Activated naive CD4-positive, alpha-beta T cell treated with anti-CD3 and anti-CD28 coated beads for 36 hours (primary cell): ENCODE measurements at regions of chr7 and their contacts with region 1.

Region 1: GRCh38 chr7:50304158-50304910 is at the start of gene IKZF1:
- DNase-seq: peak; percentile 74
- H3K4me3 Mint-ChIP-seq: peak within 1 kb of the TSS; percentile 95
- H3K27ac Mint-ChIP-seq: peak within 1 kb of the TSS; percentile 99
- H3K4me1 Mint-ChIP-seq: peaks cover 34% of the 10 kb centered on the region
- H3K27me3 Mint-ChIP-seq: no peaks in the 10 kb centered on the region
- total RNA-seq, gene IKZF1: 213 to 226 TPM

Region 2: DNA sequence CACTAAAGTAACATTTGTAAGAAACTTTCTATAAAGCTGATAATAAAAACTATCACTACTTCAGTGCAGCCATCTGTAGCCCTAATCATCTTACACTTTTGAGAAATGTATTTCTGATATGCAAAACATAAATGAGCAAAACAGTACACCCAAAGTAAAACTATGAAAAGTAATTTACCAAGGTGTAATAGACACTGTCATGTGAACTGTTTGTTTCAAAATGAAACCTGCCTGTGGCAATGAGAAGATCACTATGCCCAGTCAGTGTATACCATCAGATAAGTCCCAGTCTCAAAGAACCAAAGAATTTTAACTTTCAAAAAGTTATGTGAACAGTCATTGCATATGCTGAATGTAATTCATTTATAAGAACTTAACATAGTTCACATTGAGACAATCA is 981.9 kb before region 1 on chr7:
- CTCF ChIA-PET with region 1: no interaction called
- intact Hi-C with region 1: no loop called
- DNase-seq: no peak
- H3K4me3 Mint-ChIP-seq: no peak overlapping the region
- H3K27ac Mint-ChIP-seq: no peak overlapping the region
- H3K4me1 Mint-ChIP-seq: no peaks in the 10 kb centered on the region
- H3K27me3 Mint-ChIP-seq: no peaks in the 10 kb centered on the region

Region 3: GRCh38 chr7:50156706-50157105 is 147.6 kb before region 1 on chr7:
- CTCF ChIA-PET with region 1: no interaction called
- intact Hi-C with region 1: no loop called
- DNase-seq: no peak
- H3K4me3 Mint-ChIP-seq: peak overlapping the region; percentile 50
- H3K27ac Mint-ChIP-seq: peak overlapping the region; percentile 92
- H3K4me1 Mint-ChIP-seq: peaks cover 45% of the 10 kb centered on the region
- H3K27me3 Mint-ChIP-seq: no peaks in the 10 kb centered on the region

Region 4: DNA sequence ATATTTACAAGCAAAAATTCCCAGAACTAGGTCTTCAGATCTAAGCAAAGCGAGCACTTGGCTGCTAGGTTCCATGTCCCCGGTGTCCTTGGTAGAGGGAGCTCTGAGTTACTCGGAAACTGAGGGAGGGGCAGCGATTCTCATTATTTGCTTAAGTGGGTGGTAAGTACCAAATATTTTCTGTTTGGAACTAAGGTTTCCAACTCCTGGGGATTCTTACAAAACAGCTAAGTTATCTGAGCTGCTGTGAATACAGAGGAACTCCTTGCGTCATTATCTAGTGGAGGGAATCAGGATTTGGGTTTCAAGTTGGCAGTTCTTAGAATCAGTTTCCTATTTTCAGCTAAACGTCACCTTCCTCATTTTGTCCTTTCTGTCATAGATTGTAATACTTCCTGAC is 76.6 kb before region 1 on chr7:
- CTCF ChIA-PET with region 1: interaction called, 16 read pairs
- intact Hi-C with region 1: loop called (anchors 2 kb)
- DNase-seq: no peak
- H3K4me3 Mint-ChIP-seq: peak overlapping the region; percentile 64
- H3K27ac Mint-ChIP-seq: peak overlapping the region; percentile 81
- H3K4me1 Mint-ChIP-seq: peaks cover 37% of the 10 kb centered on the region
- H3K27me3 Mint-ChIP-seq: no peaks in the 10 kb centered on the region

Region 5: GRCh38 chr7:50281680-50282445 is 22.5 kb before region 1 on chr7:
- CTCF ChIA-PET with region 1: interaction called, 8 read pairs
- intact Hi-C with region 1: loop called (anchors 1 kb)
- DNase-seq: peak; percentile 29
- H3K4me3 Mint-ChIP-seq: peak overlapping the region; percentile 59
- H3K27ac Mint-ChIP-seq: peak overlapping the region; percentile 75
- H3K4me1 Mint-ChIP-seq: peaks cover 79% of the 10 kb centered on the region
- H3K27me3 Mint-ChIP-seq: no peaks in the 10 kb centered on the region

Region 6: GRCh38 chr7:50292763-50293162 is 11.6 kb before region 1 on chr7:
- CTCF ChIA-PET with region 1: no interaction called
- intact Hi-C with region 1: loop called (anchors 1 kb)
- DNase-seq: no peak
- H3K4me3 Mint-ChIP-seq: no peak overlapping the region
- H3K27ac Mint-ChIP-seq: peak overlapping the region; percentile 5
- H3K4me1 Mint-ChIP-seq: peaks cover 52% of the 10 kb centered on the region
- H3K27me3 Mint-ChIP-seq: no peaks in the 10 kb centered on the region

Region 7: DNA sequence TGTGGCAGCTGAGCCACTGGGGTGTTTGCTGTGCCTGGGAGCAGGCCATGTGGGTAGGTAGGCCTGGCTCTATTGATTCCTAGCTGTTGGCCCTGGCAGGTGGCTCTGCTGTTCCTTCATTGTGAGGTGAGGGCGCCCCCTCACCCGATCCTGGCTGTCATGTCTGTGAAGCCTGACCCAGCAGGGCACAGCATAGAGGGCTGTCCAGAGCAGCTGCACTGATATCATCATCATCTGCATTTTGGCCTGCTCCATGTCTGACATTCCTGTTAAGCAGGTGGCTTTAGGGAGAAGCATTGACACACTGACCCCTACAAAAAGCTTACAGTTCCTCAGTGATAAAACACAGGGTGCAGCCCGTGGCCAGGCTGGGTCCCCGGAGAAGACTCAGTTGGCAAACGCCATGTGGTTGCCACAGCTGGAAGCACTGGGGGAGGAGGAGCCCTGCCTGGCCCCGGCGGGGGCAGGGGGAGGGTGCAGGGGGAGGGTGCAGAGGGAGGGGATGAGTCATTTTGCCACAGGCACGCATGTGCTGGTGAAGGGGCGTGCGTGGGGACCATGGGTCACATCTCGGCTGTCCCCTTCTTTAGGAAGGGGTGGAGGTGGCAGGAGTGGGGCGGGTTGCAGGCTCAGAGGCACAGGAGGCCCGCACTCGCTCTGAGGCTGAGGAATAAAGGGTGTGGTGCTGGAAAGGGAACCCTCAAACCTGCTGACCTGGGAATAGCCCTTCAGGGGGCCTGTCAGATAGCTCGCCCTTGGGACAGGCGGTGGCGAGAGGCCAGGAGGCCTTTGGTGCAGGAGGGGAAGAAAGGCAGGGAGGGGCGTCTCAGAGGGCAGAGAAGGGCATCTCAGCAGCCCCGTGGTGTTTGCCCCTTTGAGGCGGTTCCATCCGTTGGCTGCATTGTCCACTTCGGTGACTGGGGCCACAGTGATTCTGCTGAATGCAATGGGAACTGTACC is 31.7 kb after region 1 on chr7:
- CTCF ChIA-PET with region 1: interaction called, 20 read pairs
- intact Hi-C with region 1: loop called (anchors 1 kb)
- DNase-seq: peak; percentile 91
- H3K4me3 Mint-ChIP-seq: no peak overlapping the region
- H3K27ac Mint-ChIP-seq: no peak overlapping the region
- H3K4me1 Mint-ChIP-seq: peaks cover 2% of the 10 kb centered on the region
- H3K27me3 Mint-ChIP-seq: no peaks in the 10 kb centered on the region

Region 8: GRCh38 chr7:50653126-50653864 is 349.0 kb after region 1 on chr7:
- CTCF ChIA-PET with region 1: no interaction called
- intact Hi-C with region 1: no loop called
- DNase-seq: no peak
- H3K4me3 Mint-ChIP-seq: no peak overlapping the region
- H3K27ac Mint-ChIP-seq: no peak overlapping the region
- H3K4me1 Mint-ChIP-seq: no peaks in the 10 kb centered on the region
- H3K27me3 Mint-ChIP-seq: no peaks in the 10 kb centered on the region